ENCODE measurements at regions of chrX and their contacts with region 1.

Region 1: GRCh38 chrX:46918434-46918833 is 6.2 kb downstream of the JADE3 start:
- DNase-seq: no peak
- ATAC-seq: no peak
- H3K4me3 ChIP-seq: no peak overlapping the region
- H3K27ac ChIP-seq: no peak overlapping the region
- H3K4me1 ChIP-seq: peaks cover 0 to 10% (median 0%) of the 10 kb centered on the region in 12 donors
- H3K27me3 ChIP-seq: peaks cover 0 to 6% (median 0%) of the 10 kb centered on the region in 9 donors
- CTCF ChIP-seq: no peak
- POLR2A ChIP-seq: no peak

Region 2: GRCh38 chrX:46953597-46953996 is 35.2 kb after region 1 on chrX:
- intact Hi-C with region 1: loop called in 1 of 10 experiments (anchors 5 kb)
- DNase-seq: no peak
- ATAC-seq: peak in 3 of 4 donors; percentile 31 to 61 (median 34)
- H3K4me3 ChIP-seq: no peak overlapping the region
- H3K27ac ChIP-seq: peak overlapping the region in 1 of 12 donors; percentile 46
- H3K4me1 ChIP-seq: peaks cover 0 to 25% (median 8%) of the 10 kb centered on the region in 12 donors
- H3K27me3 ChIP-seq: peaks cover 0 to 4% (median 0%) of the 10 kb centered on the region in 9 donors
- CTCF ChIP-seq: no peak
- POLR2A ChIP-seq: no peak

Region 3: GRCh38 chrX:46961574-46962283 is 43.3 kb after region 1 on chrX:
- intact Hi-C with region 1: loop called in 2 of 10 experiments (anchors 5 kb)
- DNase-seq: no peak
- ATAC-seq: no peak
- H3K4me3 ChIP-seq: no peak overlapping the region
- H3K27ac ChIP-seq: no peak overlapping the region
- H3K4me1 ChIP-seq: peaks cover 0 to 9% (median 0%) of the 10 kb centered on the region in 12 donors
- H3K27me3 ChIP-seq: peaks cover 0 to 33% (median 0%) of the 10 kb centered on the region in 9 donors
- CTCF ChIP-seq: no peak
- POLR2A ChIP-seq: no peak

Region 4: GRCh38 chrX:47030339-47030738 is 111.9 kb after region 1 on chrX:
- intact Hi-C with region 1: no loop called
- DNase-seq: peak in 1 of 5 donors; percentile 5
- ATAC-seq: no peak
- H3K4me3 ChIP-seq: no peak overlapping the region
- H3K27ac ChIP-seq: no peak overlapping the region
- H3K4me1 ChIP-seq: no peaks in the 10 kb centered on the region
- H3K27me3 ChIP-seq: peaks cover 0 to 34% (median 0%) of the 10 kb centered on the region in 9 donors
- CTCF ChIP-seq: peak; percentile 47 to 68 (median 58)
- POLR2A ChIP-seq: no peak